Common myeloid progenitor, CD34-positive (primary cell): ENCODE measurements at regions of chr9 and their contacts with region 1.

Region 1: DNA sequence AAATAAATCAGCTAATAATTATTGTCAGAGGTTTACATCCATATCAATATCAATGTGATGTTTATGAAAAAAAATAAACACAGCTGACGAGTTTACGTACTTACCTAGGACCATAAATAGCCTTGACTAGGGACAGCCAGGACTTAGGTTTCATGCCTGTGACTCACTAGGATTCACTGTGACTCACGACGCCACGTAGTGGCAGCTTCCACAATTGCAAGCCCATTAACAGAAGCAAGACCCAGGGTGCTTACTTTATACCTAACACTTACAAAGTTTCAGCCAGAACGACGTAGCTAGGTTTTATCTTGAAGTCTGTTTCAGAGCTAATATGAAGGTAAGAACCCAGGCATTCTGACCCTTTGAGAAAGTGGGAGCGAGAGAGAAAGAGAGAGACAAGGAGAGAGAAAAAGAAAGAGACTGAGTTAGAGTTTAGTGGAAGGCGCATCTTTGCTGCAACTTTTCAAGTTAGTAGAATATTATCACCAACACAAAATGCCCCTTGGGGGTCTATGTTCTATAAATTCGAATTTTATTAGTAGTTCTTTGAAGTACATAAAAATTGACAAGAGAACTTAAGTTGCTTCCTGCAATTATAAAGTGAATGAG is 191.2 kb downstream of the GNA14 start:
- DNase-seq: peak; percentile 85 to 93 (median 88)
- H3K4me3 ChIP-seq: no peak overlapping the region
- H3K27ac ChIP-seq: no peak overlapping the region
- H3K4me1 ChIP-seq: peaks cover 5 to 20% (median 9%) of the 10 kb centered on the region in 4 experiments
- H3K27me3 ChIP-seq: no peaks in the 10 kb centered on the region

Region 2: DNA sequence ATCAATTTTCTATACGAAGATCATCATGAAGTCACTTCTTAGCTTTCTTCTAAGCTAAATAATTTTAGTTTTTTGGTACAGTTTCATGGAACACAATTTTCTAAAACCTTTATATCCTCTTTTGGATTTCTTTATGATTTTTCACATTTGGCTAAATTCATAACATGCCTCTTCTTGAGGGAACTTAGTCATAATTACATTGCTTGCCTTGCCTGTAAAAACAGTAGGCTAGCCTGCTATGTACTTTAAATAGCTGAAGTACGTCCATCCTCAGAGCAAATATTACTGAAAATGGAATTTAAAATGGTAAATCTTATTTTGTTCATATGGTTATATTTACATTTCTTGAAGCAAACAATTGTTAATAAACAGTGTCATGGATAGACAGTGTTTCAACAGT is 54.6 kb before region 1 on chr9:
- CTCF ChIA-PET with region 1: no interaction called
- POLR2A ChIA-PET with region 1: no interaction called
- DNase-seq: no peak
- H3K4me3 ChIP-seq: no peak overlapping the region
- H3K27ac ChIP-seq: no peak overlapping the region
- H3K4me1 ChIP-seq: no peaks in the 10 kb centered on the region
- H3K27me3 ChIP-seq: no peaks in the 10 kb centered on the region

Region 3: DNA sequence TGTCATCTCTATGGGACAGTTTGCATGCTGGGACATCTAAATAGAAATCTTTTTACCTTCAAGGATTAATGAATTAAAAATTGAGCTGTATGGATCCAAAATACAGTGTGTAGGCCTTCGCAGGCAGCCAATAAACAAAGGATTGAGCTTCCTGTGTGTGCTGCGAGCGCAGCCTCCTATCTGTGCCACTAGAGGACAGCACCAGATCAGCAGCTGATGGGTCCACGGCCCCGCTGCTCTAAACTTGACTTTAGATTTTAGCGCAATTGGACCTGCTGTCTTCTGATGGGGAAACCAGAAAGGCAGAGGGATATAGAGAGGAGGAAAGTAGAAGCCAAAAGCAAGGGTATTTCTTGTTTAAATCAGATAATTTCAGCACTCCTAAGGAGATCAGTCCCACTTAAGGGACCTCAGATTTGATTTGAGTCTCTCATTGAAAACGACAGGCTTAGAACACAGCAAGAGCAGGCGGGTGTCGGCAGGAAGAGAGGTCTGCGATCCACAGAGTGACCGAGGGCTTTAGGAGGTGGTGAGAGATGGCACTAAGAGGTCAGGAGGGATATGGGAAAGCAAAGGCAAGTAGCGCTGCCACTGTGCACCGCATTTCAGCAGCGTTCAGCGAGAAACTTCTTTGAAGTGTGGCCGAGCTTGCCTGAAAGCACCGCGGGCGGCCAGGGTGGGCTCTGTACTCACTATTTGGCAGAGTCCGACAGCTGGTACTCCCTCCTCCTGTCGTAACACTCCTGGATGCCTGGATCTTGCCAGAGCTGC is 23.1 kb before region 1 on chr9:
- CTCF ChIA-PET with region 1: interaction called, 14 read pairs
- POLR2A ChIA-PET with region 1: no interaction called
- DNase-seq: peak; percentile 59 to 76 (median 73)
- H3K4me3 ChIP-seq: no peak overlapping the region
- H3K27ac ChIP-seq: no peak overlapping the region
- H3K4me1 ChIP-seq: no peaks in the 10 kb centered on the region
- H3K27me3 ChIP-seq: no peaks in the 10 kb centered on the region

Region 4: DNA sequence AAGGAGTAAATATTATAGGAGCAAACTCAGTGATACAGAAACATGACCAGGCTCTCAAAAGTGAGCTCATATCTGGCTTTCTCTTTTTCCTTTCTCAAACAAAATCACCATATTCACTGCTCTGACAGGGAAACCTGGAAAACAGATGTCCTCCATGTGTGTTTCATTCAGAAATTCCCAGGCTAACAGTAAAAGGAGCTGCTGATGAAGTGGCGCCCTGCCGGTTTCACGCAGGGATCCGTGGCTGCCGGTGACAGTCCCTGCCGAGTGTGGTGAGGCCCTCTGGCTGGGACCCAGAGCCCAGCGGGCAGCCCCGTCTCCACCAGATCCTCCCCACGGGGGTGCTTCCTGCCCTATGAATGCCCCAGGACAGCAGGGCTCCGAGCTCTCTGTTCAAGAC is 16.9 kb before region 1 on chr9:
- CTCF ChIA-PET with region 1: interaction called, 75 read pairs
- POLR2A ChIA-PET with region 1: no interaction called
- DNase-seq: no peak
- H3K4me3 ChIP-seq: no peak overlapping the region
- H3K27ac ChIP-seq: no peak overlapping the region
- H3K4me1 ChIP-seq: no peaks in the 10 kb centered on the region
- H3K27me3 ChIP-seq: no peaks in the 10 kb centered on the region

Region 5: GRCh38 chr9:77469515-77470231 is 12.7 kb after region 1 on chr9:
- CTCF ChIA-PET with region 1: interaction called, 19 read pairs
- POLR2A ChIA-PET with region 1: no interaction called
- DNase-seq: no peak
- H3K4me3 ChIP-seq: no peak overlapping the region
- H3K27ac ChIP-seq: no peak overlapping the region
- H3K4me1 ChIP-seq: no peaks in the 10 kb centered on the region
- H3K27me3 ChIP-seq: no peaks in the 10 kb centered on the region

Region 6: DNA sequence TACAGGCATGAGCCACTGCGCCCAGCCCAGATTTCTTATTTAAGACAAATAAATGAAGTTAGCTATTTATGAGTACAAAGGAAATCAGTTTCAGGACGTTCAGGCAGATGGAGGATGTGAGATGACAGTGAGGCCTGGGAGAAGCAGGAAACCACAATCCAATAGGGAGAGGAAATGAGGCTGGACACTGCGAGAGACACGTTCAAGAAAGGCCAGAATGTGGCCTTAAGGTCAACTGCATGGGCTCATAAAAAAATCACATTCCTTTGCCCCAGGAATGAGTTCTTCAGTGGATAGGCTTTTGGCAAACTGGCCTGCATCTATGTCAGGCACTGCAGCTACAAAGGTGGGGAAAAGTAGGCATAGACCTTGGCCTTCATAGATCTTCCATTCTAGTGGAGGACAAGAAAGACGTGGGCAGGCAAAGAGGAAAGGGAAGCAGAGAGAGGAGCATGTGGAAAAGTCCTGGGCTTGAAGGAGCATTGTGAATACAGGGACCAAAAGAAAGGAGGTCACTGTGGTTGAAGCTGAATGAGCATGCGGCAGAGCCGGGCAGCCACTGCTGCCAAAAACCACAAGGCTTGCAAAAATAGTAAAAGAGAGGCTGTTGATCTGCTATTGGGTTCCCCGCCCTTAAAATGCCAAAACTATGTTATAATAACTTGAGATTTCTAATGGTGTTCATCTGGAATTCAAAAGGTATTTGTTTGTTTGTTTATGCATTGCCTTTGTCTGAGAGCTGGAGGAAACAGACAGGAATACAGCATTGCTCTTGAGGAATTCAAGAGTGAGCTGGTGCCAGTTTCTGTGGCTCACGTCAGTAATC is 58.2 kb after region 1 on chr9:
- CTCF ChIA-PET with region 1: no interaction called
- POLR2A ChIA-PET with region 1: no interaction called
- DNase-seq: peak; percentile 5 to 45 (median 34)
- H3K4me3 ChIP-seq: peak overlapping the region in 1 of 7 experiments; percentile 19
- H3K27ac ChIP-seq: no peak overlapping the region
- H3K4me1 ChIP-seq: peaks cover 0 to 14% (median 11%) of the 10 kb centered on the region in 4 experiments
- H3K27me3 ChIP-seq: no peaks in the 10 kb centered on the region

Region 7: DNA sequence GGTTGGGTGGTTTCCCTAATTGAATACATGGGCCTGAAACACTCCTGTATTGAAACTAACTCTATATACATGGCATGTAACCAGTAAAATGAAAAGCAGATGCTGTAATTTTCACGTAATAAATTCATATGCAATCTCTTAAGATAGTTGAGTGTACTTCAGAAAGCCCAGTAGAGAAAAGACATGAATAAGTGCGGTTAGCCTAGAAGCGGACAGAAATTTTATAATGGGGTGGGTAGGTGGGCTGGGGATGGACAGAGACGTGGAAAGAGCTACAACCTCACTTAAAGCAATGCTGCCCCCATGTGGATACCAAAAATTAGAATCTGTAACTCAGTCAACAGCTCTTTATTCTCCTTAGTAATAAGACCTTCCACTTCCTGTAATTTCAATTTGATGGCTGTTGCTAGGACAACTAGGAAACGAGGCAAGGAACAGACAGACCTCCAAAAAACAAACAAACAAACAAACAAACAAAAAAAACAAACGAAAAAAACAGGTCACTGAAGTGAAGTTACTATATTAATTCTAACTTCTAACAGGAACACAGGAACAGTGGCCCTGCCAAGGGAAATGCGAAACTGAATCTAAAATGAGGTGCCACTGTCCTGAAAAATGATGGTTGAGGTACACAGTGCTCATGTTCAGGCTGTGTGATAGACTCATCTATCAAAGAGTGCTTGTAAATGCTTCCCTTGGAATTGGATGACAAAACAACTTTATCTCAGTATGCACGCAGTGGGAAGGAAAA is 294.6 kb after region 1 on chr9:
- CTCF ChIA-PET with region 1: interaction called, 72 read pairs
- POLR2A ChIA-PET with region 1: no interaction called
- DNase-seq: peak; percentile 71 to 81 (median 80)
- H3K4me3 ChIP-seq: no peak overlapping the region
- H3K27ac ChIP-seq: no peak overlapping the region
- H3K4me1 ChIP-seq: peaks cover 0 to 12% (median 0%) of the 10 kb centered on the region in 4 experiments
- H3K27me3 ChIP-seq: no peaks in the 10 kb centered on the region

Region 8: GRCh38 chr9:77916410-77916819 is 459.5 kb after region 1 on chr9:
- CTCF ChIA-PET with region 1: no interaction called
- POLR2A ChIA-PET with region 1: no interaction called
- DNase-seq: peak in 2 of 3 donors; percentile 62 to 64
- H3K4me3 ChIP-seq: no peak overlapping the region
- H3K27ac ChIP-seq: peak overlapping the region; percentile 25 to 68
- H3K4me1 ChIP-seq: peaks cover 19 to 46% (median 33%) of the 10 kb centered on the region in 4 experiments
- H3K27me3 ChIP-seq: no peaks in the 10 kb centered on the region